Adrenal gland (tissue), 19 donors: ENCODE measurements at regions of chr11 and their contacts with region 1.

Region 1: GRCh38 chr11:19951558-19952115 is 208.6 kb downstream of the DBX1 start:
- DNase-seq: no peak
- H3K4me3 ChIP-seq: no peak overlapping the region
- H3K27ac ChIP-seq: no peak overlapping the region
- H3K4me1 ChIP-seq: peaks cover 0 to 14% of the 10 kb centered on the region in 2 donors
- H3K27me3 ChIP-seq: no peaks in the 10 kb centered on the region
- CTCF ChIP-seq: peak; percentile 42 to 76 (median 68)
- POLR2A ChIP-seq: no peak

Region 2: GRCh38 chr11:20102397-20102796 is 150.8 kb after region 1 on chr11:
- intact Hi-C with region 1: loop called in 1 of 2 experiments (anchors 10 kb)
- DNase-seq: peak in 6 of 7 donors; percentile 37 to 71 (median 62)
- H3K4me3 ChIP-seq: no peak overlapping the region
- H3K27ac ChIP-seq: no peak overlapping the region
- H3K4me1 ChIP-seq: no peaks in the 10 kb centered on the region
- H3K27me3 ChIP-seq: no peaks in the 10 kb centered on the region
- CTCF ChIP-seq: no peak
- POLR2A ChIP-seq: no peak

Region 3: DNA sequence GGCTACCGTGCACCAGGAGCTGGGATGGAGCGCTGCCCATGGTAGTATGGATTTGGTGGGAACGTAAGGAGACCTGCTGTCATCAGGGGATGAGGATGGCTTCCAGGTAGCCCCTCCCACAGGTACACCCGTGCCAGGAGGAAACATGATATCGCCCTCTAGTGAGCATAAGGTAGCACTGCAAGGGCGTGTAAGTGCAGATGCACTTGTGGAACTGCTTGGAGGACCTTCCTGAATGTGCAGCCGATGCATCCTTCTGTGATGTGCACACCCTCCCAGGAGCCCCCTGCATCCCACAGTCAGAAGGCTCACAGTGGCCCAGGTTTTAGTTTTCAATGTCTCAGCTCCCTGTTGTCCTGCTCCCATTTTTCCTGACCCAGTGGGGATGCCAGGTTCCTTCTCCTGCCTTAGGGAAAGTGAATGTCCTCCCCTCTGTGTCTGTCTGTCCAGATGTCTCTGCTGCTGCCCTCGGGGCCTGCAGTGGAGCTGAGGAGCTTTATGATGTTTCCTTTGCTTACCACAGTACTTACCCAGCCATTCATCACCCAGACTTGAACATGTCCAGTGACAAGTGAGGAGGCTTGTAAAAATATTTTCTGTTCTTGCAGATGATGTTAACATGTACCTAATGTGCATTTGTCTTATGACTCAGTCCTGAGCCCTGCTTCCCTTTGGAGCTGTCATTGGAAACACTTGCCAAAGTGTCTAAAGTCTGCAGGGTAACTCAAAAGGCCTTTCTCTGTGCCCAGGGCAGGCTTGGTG is 159.5 kb after region 1 on chr11:
- intact Hi-C with region 1: loop called (anchors 5 to 10 kb)
- DNase-seq: peak; percentile 27 to 75 (median 35)
- H3K4me3 ChIP-seq: no peak overlapping the region
- H3K27ac ChIP-seq: no peak overlapping the region
- H3K4me1 ChIP-seq: peaks cover 11 to 13% of the 10 kb centered on the region in 2 donors
- H3K27me3 ChIP-seq: no peaks in the 10 kb centered on the region
- CTCF ChIP-seq: peak; percentile 52 to 75 (median 67)
- POLR2A ChIP-seq: no peak

Region 4: DNA sequence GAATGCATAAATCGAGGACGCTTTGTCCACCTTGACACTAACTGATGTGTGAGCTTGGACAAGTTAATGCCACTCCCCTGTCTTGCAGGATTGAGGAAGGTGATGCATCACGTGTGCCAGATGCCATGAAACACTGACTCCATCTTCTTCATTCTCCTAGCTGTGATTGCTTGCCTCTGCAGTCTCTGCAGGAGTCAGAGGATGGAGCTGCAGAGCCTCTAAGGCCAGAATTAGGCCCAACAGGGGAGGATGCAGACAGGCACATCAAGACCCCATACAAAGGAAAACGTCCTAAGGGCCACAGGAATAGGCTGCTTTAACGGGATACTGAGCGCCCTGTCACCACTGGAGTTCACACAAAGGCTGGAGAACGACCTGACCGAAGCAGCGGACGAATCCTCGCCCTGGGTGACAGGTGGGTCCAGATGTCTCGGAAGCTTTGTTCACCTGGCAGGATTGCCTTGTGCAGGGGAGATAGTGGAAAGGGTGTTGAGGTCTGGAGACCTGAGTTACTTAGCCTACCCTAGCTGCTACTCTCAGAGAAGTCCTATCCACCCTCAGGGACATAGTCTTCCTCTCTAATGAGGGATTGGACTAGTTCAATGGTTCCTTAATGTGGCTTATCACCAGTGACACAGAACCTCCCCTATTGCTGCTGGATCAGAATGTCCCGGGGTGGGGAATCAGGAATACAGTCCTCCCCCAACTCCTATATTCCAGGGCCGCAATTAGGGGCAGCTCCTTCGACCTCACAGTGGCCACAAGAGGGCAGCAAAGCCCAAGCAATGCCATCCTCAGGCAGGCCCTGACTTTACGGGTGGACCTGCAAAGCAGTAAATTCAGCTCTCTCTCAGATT is 176.3 kb after region 1 on chr11:
- intact Hi-C with region 1: loop called (anchors 5 kb)
- DNase-seq: peak; percentile 68 to 89 (median 79)
- H3K4me3 ChIP-seq: no peak overlapping the region
- H3K27ac ChIP-seq: no peak overlapping the region
- H3K4me1 ChIP-seq: peaks cover 0 to 6% of the 10 kb centered on the region in 2 donors
- H3K27me3 ChIP-seq: no peaks in the 10 kb centered on the region
- CTCF ChIP-seq: peak; percentile 71 to 90 (median 82)
- POLR2A ChIP-seq: no peak

Region 5: DNA sequence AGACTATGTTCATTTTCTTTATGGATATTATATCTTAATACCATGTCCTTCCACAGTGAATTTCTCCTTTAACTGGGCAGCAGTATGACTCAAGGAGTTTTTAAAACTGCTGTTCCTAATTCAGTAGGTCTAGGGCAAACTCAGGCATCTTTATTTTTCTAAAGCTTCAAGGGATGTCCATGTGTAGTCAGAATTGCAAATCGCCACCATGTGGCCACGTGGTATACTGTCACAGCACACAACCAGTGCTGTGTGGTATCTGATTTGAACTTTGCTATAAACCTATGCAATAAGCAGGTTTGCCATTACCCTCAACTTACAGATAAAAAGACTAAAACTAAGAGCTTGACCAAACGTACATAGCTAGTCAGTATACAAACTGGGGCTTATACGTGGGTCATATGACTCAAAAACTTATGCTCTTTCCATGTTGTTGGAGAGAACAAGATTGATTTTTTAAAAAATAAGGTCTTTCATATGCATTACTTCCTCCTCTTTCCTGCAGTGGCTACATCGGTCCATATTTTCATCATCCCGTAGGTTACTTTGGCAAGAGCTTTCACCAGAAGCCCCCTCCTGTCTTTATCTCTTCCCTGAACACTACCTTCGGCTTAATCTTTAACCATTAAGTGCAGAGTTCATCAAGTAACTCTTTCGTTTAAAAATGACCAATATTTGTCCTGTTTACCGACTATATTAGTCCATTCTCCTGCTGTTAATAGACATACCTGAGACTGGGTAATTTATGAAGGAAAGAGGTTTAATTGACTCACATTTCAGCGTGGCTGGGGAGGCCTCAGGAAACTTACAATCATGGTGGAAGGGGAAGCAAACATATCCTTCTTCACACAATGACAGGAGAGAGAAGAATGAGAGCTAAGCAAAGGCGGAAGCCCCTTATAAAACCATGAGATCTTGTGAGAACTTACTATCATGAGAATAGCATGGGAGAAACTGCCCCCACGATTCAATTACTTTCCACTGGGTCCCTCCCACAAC is 403.9 kb after region 1 on chr11:
- intact Hi-C with region 1: loop called in 1 of 2 experiments (anchors 10 kb)
- DNase-seq: peak in 3 of 7 donors; percentile 53 to 66 (median 54)
- H3K4me3 ChIP-seq: no peak overlapping the region
- H3K27ac ChIP-seq: no peak overlapping the region
- H3K4me1 ChIP-seq: peaks cover 0 to 4% of the 10 kb centered on the region in 2 donors
- H3K27me3 ChIP-seq: no peaks in the 10 kb centered on the region
- CTCF ChIP-seq: peak; percentile 36 to 63 (median 54)
- POLR2A ChIP-seq: no peak